ENCODE measurements at regions of chr18 and their contacts with region 1.

Region 1: DNA sequence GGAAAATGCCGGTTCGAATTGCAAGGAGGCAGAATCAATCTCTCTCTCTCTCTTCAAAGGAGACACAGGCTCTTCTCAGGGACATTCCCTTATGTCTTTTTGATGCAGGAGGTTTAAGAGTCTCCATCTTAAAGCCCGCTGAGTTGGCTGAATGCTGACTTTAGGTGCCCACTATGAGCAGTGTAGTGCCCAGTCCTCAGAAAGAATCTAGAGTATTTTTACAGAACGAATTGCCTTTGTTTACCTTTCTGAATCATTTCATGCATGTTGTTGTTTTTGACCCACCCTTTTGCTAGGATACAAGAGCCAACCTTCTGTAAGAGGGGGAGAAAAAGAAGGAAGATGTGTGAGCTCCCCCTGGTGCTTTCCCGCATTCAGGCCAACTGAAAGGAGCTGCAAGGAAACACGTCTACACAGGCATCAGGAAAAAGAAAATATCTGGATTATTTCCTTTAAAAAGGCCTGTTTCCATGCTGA is 193.5 kb upstream of the TCF4 start:
- DNase-seq: peak; percentile 36 to 37
- H3K4me3 ChIP-seq: no peak overlapping the region
- H3K4me3 Mint-ChIP-seq: no peak overlapping the region
- H3K27ac Mint-ChIP-seq: no peak overlapping the region
- H3K4me1 ChIP-seq: no peaks in the 10 kb centered on the region
- H3K4me1 Mint-ChIP-seq: no peaks in the 10 kb centered on the region
- H3K27me3 ChIP-seq: no peaks in the 10 kb centered on the region
- H3K27me3 Mint-ChIP-seq: no peaks in the 10 kb centered on the region
- CTCF ChIP-seq: peak; percentile 41

Region 2: DNA sequence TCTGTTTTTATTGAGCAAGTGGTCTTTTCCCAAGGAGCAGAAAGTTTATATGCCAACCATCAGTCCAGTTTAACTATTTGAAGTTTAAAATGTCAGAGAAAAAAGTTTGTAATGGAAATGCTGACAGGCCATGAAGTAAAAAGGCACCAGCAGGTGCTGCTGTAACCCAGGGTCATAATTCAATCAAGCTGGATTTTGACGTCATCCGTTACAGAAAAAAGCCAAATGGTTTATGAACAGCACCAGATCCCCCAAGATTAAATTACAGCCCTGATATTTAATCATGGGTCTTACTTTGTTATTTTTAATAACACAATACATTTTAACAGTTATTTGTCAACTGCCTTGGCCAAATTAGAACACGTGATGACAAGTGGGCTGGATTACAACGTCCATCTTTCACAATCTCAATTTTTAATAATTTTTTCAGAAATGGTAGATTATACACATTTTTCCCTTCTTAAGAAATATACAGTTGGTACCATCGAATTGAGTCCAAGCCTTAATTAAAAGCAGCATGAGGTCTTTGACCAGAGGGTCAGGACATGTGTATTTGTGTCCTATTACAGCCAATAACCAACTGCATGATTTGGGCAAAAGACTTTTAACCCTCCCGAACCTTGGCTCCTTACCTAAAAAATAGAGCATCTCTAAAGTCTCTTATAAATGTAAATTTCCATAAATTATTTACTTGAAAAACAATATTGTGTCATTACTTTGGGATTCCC is 203.5 kb before region 1 on chr18:
- CTCF ChIA-PET with region 1: no interaction called
- POLR2A ChIA-PET with region 1: no interaction called
- intact Hi-C with region 1: loop called (anchors 5 kb)
- DNase-seq: no peak
- H3K4me3 ChIP-seq: no peak overlapping the region
- H3K4me3 Mint-ChIP-seq: no peak overlapping the region
- H3K27ac Mint-ChIP-seq: no peak overlapping the region
- H3K4me1 ChIP-seq: peaks cover 34% of the 10 kb centered on the region
- H3K4me1 Mint-ChIP-seq: peaks cover 8% of the 10 kb centered on the region
- H3K27me3 ChIP-seq: no peaks in the 10 kb centered on the region
- H3K27me3 Mint-ChIP-seq: no peaks in the 10 kb centered on the region
- CTCF ChIP-seq: peak in 1 of 2 experiments; percentile 16

Region 3: GRCh38 chr18:56197241-56197859 is 415.8 kb after region 1 on chr18:
- CTCF ChIA-PET with region 1: no interaction called
- POLR2A ChIA-PET with region 1: no interaction called
- intact Hi-C with region 1: no loop called
- DNase-seq: no peak
- H3K4me3 ChIP-seq: no peak overlapping the region
- H3K4me3 Mint-ChIP-seq: no peak overlapping the region
- H3K27ac Mint-ChIP-seq: no peak overlapping the region
- H3K4me1 ChIP-seq: no peaks in the 10 kb centered on the region
- H3K4me1 Mint-ChIP-seq: no peaks in the 10 kb centered on the region
- H3K27me3 ChIP-seq: no peaks in the 10 kb centered on the region
- H3K27me3 Mint-ChIP-seq: no peaks in the 10 kb centered on the region
- CTCF ChIP-seq: no peak

Region 4: GRCh38 chr18:56738184-56738583 is 956.7 kb after region 1 on chr18:
- CTCF ChIA-PET with region 1: no interaction called
- POLR2A ChIA-PET with region 1: no interaction called
- intact Hi-C with region 1: no loop called
- DNase-seq: no peak
- H3K4me3 ChIP-seq: no peak overlapping the region
- H3K4me3 Mint-ChIP-seq: no peak overlapping the region
- H3K27ac Mint-ChIP-seq: no peak overlapping the region
- H3K4me1 ChIP-seq: no peaks in the 10 kb centered on the region
- H3K4me1 Mint-ChIP-seq: no peaks in the 10 kb centered on the region
- H3K27me3 ChIP-seq: no peaks in the 10 kb centered on the region
- H3K27me3 Mint-ChIP-seq: no peaks in the 10 kb centered on the region
- CTCF ChIP-seq: no peak